ENCODE measurements at regions of chr1 and their contacts with region 1.

Region 1: DNA sequence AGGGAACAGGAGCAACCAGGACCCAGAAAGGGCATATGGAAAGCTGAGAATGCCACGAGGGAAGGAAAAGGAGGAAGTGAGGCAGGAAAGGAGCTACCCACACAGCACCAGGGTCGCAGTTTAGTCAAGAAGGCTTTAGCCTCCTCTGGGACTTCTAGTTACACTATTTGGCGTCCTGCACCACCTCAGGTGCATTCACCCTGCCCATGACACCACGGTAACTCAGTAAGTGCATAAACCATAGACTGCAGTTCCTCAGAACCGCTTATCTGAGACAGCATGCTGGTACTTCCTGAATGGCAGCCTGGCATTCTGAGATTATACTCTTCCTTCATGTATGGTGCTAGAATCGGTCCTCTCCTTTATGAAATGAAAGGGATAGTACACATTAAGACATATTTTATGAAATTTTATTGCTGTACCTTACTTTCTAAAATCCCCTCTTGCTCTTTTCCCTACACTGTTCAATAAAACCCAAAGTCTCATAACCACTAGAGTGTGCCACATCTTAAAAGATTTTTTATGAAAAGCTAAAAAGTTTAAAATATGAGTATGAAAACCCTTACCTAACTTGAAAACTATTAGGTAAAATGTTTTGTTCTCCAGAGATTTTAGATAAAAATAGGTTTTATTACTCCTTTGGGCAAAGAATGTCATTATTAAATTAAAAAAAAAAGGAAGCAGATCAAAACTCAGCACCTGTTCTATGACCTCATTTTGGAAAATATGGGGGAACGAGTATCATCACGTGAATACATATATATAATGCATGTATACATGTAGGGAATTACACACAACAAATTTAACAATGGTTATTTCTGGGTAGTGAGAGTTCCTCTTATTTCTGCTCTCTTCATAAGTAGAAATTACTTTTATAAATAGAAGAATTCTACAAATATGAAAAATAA is 67.3 kb downstream of the VAV3 start:
- DNase-seq: no peak

Region 2: DNA sequence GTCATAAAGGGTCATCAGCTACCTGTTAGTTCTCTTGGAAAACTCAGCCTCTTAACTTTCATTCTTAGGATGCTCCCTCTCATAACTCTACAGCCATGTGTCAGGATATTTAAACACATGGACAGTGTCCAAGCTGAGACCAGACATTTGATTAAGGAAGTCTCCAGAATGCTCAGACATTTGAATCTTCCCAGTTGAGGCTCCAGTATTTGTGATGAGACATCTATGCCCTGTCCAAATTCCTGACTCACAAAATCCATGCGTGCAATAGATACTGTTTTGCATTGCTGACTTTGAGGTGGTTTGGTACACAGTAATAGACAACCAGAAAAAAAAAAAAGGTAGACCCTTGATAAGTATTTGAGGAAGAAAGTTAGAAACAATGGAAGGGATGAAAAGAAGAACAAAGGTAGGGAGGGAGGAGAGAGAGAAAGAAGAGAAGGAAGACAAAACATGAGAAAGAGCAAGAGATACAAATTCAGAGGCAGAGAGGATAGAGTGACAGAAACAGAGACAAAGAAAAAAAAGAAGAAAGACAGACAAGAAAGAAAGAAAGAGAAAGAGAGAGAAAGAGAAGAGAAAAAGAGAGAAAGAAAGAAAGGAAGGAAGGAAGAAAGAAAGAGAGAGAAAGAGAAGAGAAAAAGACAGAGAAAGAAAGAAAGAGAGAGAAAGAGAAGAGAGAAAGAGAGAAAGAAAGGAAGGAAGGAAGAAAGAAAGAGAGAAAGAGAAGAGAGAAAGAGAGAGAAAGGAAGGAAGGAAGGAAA is 1116.7 kb before region 1 on chr1:
- intact Hi-C with region 1: loop called in 1 of 2 experiments (anchors 5 kb)
- DNase-seq: no peak

Region 3: DNA sequence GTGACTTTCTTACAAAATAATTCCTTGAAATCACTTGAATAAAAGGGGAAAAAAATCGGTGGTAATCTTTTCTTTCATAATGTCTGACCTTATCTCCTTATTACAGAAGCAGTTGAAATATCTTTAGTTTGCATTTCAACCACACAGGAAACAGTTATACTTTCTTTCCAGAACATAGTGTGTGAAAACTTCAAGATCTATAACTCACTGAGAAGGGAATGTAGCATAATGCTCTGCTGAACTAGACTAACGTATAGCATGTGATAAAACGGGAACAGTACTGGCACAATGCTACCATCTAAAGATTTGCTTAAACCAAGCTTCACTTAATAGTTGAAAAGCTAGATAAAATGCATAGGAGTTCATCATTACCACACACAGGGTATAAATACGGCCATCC is 22.3 kb after region 1 on chr1:
- intact Hi-C with region 1: no loop called
- DNase-seq: no peak

Region 4: DNA sequence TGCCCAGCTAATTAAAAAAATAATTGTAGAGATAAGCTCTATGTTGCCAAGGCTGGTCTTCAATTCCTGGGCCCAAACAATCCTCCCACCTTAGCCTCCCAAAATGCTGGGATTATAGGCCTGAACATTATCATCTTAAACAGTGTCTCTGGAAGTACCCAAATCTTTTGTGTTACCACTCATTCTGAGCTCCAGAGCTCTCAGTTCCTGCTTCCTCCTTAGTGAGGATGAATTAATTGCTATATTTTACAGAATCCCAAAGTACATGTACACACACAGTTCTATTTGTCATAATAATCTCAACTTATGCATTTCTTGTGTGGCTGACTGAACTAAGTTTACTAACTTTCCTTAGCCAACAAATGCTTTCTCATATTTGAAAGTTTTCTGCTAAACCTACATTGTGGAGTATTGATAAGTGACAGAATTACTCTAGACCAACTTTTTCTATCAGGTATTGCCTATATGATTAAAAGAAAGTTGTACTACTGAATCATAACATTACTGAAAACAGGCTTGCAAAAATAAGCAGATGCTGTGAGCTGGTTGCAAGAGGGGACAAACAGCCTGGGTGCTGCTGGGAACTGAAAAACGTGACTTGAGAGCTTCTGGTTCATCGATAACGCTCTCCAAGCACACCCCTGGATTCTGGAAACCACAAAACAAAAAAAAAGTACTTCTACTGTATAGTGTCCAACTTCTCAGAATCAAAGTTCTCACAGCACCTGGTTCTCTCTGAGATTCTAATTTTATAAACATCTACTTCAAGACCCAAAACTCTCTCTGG is 52.0 kb after region 1 on chr1:
- intact Hi-C with region 1: no loop called
- DNase-seq: no peak